Calu3 (cell line): ENCODE measurements at regions of chr16 and their contacts with region 1.

Region 1: DNA sequence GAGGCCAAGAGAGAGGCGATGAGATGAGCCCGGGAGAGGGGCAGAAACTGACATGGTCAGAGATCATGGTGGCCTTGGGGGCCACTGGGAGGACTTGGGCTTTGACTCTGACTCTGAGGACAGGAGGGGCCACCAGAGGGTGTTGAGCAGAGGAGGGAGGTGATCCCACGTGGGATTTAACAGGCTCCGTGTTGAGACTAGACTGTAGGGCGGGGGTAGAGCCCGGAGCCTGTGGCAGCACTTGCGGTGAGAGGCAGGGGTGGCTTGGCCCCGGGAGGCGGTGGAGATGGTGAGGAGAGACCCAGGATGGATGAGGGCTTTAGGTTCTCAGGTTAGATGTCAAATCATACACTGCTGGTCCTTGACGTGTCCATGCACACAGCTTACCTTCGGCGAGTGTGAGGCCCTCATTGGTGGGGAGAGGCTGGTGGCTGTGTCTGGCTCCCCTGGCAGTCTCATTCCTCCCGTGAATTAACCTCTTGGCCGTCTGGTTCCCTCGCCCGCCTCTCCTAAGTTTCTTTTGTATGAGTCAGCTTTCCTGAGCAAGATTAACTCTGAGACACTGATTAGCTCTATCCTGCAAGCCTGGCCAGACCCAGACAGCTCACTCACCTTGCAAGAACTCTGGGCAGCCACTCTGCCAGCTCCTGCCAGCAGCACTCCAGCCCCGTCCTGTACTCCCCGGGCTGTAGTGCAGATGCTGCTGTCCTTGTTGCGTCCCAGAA is 39.7 kb downstream of the VPS35L start:
- DNase-seq: peak; percentile 78
- H3K4me3 Mint-ChIP-seq: peak overlapping the region; percentile 42
- H3K27ac Mint-ChIP-seq: peak overlapping the region; percentile 51
- H3K4me1 Mint-ChIP-seq: peaks cover 24% of the 10 kb centered on the region
- H3K27me3 Mint-ChIP-seq: no peaks in the 10 kb centered on the region
- CTCF ChIP-seq: no peak

Region 2: GRCh38 chr16:19486757-19487330 is 108.4 kb before region 1 on chr16:
- CTCF ChIA-PET with region 1: no interaction called
- intact Hi-C with region 1: no loop called
- DNase-seq: no peak
- H3K4me3 Mint-ChIP-seq: no peak overlapping the region
- H3K27ac Mint-ChIP-seq: peak overlapping the region; percentile 58
- H3K4me1 Mint-ChIP-seq: peaks cover 23% of the 10 kb centered on the region
- H3K27me3 Mint-ChIP-seq: no peaks in the 10 kb centered on the region
- CTCF ChIP-seq: no peak

Region 3: GRCh38 chr16:19555162-19555937 is 39.9 kb before region 1 on chr16 and contains the start of gene VPS35L:
- CTCF ChIA-PET with region 1: interaction called, 6 read pairs
- intact Hi-C with region 1: loop called (anchors 1 kb)
- DNase-seq: peak; percentile 94
- H3K4me3 Mint-ChIP-seq: peak within 1 kb of the TSS; percentile 71
- H3K27ac Mint-ChIP-seq: peak within 1 kb of the TSS; percentile 66
- H3K4me1 Mint-ChIP-seq: no peaks in the 10 kb centered on the region
- H3K27me3 Mint-ChIP-seq: no peaks in the 10 kb centered on the region
- CTCF ChIP-seq: peak; percentile 51
- total RNA-seq, gene VPS35L: 14.2 and 25.4 TPM in 2 replicates

Region 4: DNA sequence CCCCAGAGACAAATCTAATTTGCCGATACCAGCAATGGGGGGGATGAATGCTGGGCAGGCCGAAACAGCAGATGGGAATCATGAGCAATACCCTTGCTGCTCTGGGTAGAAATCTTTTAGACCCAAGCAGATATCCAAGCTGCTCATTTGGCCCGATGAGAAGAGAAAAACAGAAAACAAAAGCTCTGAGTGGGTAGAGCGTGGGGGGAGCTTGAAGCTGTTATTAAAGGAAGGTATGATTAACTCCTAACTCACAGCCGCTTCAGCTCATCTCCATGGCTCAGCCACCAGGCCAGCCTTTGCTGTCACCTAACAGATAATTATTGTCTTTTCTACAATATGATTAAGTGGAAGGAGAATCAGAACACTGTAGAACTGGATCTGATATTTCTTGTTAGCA is 18.6 kb after region 1 on chr16:
- CTCF ChIA-PET with region 1: no interaction called
- intact Hi-C with region 1: no loop called
- DNase-seq: no peak
- H3K4me3 Mint-ChIP-seq: no peak overlapping the region
- H3K27ac Mint-ChIP-seq: no peak overlapping the region
- H3K4me1 Mint-ChIP-seq: no peaks in the 10 kb centered on the region
- H3K27me3 Mint-ChIP-seq: no peaks in the 10 kb centered on the region
- CTCF ChIP-seq: no peak

Region 5: DNA sequence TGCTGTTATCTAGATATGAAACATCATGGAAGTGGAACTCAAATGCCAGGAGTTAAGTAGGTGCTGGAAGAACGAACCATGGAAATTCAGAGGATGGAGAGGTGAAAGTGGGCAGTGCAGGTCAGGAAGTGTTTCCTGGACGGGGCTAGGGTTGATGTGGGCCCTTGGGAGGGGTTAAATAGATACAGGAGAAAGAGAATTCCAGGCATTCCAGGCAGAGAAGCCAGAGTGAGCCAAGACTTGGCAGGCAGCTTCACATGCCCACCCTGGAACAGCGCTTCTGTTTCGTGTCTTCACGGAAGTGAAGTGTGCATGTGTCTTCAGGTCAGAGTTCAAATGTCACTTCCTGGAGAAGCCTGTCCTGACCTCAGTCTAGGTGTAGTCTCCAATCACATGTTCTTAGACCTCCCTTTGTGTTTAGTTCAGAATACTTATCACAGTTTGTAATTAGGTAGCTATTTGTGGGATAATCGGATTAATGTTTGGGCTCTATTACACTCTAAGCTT is 690.8 kb after region 1 on chr16:
- CTCF ChIA-PET with region 1: no interaction called
- intact Hi-C with region 1: loop called (anchors 10 kb)
- DNase-seq: no peak
- H3K4me3 Mint-ChIP-seq: no peak overlapping the region
- H3K27ac Mint-ChIP-seq: no peak overlapping the region
- H3K4me1 Mint-ChIP-seq: no peaks in the 10 kb centered on the region
- H3K27me3 Mint-ChIP-seq: peaks cover 40% of the 10 kb centered on the region
- CTCF ChIP-seq: no peak